ENCODE measurements at regions of chr17 and their contacts with region 1.

Region 1: GRCh38 chr17:44186307-44187130 is at the start of gene TMUB2:
- DNase-seq: peak; percentile 100
- H3K4me3 Mint-ChIP-seq: peak within 1 kb of the TSS; percentile 100
- H3K27ac Mint-ChIP-seq: peak within 1 kb of the TSS; percentile 99
- H3K4me1 Mint-ChIP-seq: peaks cover 43% of the 10 kb centered on the region
- H3K27me3 Mint-ChIP-seq: no peaks in the 10 kb centered on the region
- total RNA-seq, gene TMUB2: 21.2 to 22.9 TPM

Region 2: DNA sequence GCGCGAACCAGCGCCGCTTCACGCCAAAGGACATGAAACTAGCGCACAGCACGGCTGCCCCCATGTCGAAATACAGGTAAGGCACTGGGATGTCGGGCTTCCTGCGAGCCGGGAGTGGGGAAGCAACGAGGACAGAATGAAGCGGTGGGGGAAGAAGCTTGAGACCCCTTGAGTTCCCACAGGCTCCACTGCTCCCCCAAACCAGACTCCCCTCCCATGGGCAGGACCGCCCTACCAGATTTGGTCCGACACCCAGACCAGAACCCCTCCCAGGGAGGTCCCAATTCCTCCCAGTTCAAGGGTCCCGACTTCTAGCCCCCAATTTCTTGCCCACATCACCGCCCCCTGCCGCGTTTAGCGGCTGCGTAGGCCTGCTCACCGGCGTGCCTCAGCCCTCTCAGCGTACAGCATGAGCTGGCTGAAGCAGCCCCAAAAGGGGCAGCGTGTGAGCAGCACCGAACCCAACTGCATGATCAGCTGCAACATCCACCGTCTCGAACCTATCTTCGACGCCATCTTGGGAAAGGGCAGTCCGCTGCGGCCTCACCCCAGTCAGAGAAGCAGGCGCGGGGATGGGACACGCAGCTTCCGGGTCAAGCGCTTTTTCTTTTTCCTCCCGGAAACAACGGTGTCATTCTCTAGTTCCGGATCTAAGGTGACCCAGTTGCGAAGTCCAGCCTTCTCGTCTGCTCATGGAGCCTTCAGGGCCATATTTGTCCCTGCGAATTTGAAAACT is 171.9 kb before region 1 on chr17 and contains the start of gene TMEM101:
- CTCF ChIA-PET with region 1: no interaction called
- intact Hi-C with region 1: loop called (anchors 1 kb)
- DNase-seq: peak; percentile 93
- H3K4me3 Mint-ChIP-seq: peak within 1 kb of the TSS; percentile 100
- H3K27ac Mint-ChIP-seq: peak within 1 kb of the TSS; percentile 90
- H3K4me1 Mint-ChIP-seq: peaks cover 12% of the 10 kb centered on the region
- H3K27me3 Mint-ChIP-seq: no peaks in the 10 kb centered on the region
- total RNA-seq, gene TMEM101: 25.6 to 26.7 TPM

Region 3: GRCh38 chr17:44123356-44124117 is 63.0 kb before region 1 on chr17 and contains the start of gene HDAC5:
- CTCF ChIA-PET with region 1: interaction called, 3 read pairs
- intact Hi-C with region 1: loop called (anchors 2 kb)
- DNase-seq: peak; percentile 97
- H3K4me3 Mint-ChIP-seq: peak within 1 kb of the TSS; percentile 96
- H3K27ac Mint-ChIP-seq: peak within 1 kb of the TSS; percentile 97
- H3K4me1 Mint-ChIP-seq: peaks cover 32% of the 10 kb centered on the region
- H3K27me3 Mint-ChIP-seq: no peaks in the 10 kb centered on the region
- total RNA-seq, gene HDAC5: 17.9 to 18.9 TPM

Region 4: GRCh38 chr17:44199553-44200477 is 13.3 kb after region 1 on chr17 and contains the start of gene ATXN7L3:
- CTCF ChIA-PET with region 1: interaction called, 15 read pairs
- intact Hi-C with region 1: loop called (anchors 1 kb)
- DNase-seq: peak; percentile 100
- H3K4me3 Mint-ChIP-seq: peak within 1 kb of the TSS; percentile 86
- H3K27ac Mint-ChIP-seq: peak within 1 kb of the TSS; percentile 91
- H3K4me1 Mint-ChIP-seq: peaks cover 36% of the 10 kb centered on the region
- H3K27me3 Mint-ChIP-seq: no peaks in the 10 kb centered on the region
- total RNA-seq, gene ATXN7L3: 53.3 to 53.9 TPM

Measured in activated naive CD4-positive, alpha-beta T cell treated with anti-CD3 and anti-CD28 coated beads for 36 hours (primary cell).